ENCODE measurements at regions of chr9 and their contacts with region 1.

Region 1: GRCh38 chr9:77183581-77183980 is 6.2 kb downstream of the VPS13A start:
- DNase-seq: no peak
- ATAC-seq: no peak
- H3K4me3 ChIP-seq: no peak overlapping the region
- H3K27ac ChIP-seq: no peak overlapping the region
- H3K4me1 ChIP-seq: peaks cover 57% of the 10 kb centered on the region
- H3K27me3 ChIP-seq: no peaks in the 10 kb centered on the region
- CTCF ChIP-seq: no peak
- EP300 ChIP-seq: no peak
- POLR2A ChIP-seq: no peak
- RAD21 ChIP-seq: no peak

Region 2: GRCh38 chr9:77131399-77131798 is 52.2 kb before region 1 on chr9:
- CTCF ChIA-PET with region 1: no interaction called
- POLR2A ChIA-PET with region 1: no interaction called
- in situ Hi-C with region 1: no loop called
- intact Hi-C with region 1: no loop called
- DNase-seq: no peak
- ATAC-seq: no peak
- H3K4me3 ChIP-seq: no peak overlapping the region
- H3K27ac ChIP-seq: no peak overlapping the region
- H3K4me1 ChIP-seq: no peaks in the 10 kb centered on the region
- H3K27me3 ChIP-seq: no peaks in the 10 kb centered on the region
- CTCF ChIP-seq: no peak
- EP300 ChIP-seq: no peak
- POLR2A ChIP-seq: no peak
- RAD21 ChIP-seq: no peak

Region 3: GRCh38 chr9:77194423-77194822 is 10.8 kb after region 1 on chr9:
- CTCF ChIA-PET with region 1: no interaction called
- POLR2A ChIA-PET with region 1: no interaction called
- in situ Hi-C with region 1: no loop called
- intact Hi-C with region 1: loop called (anchors 2 kb)
- DNase-seq: no peak
- ATAC-seq: no peak
- H3K4me3 ChIP-seq: no peak overlapping the region
- H3K27ac ChIP-seq: no peak overlapping the region
- H3K4me1 ChIP-seq: no peaks in the 10 kb centered on the region
- H3K27me3 ChIP-seq: no peaks in the 10 kb centered on the region
- CTCF ChIP-seq: no peak
- EP300 ChIP-seq: no peak
- POLR2A ChIP-seq: no peak
- RAD21 ChIP-seq: no peak